Endothelial cell of umbilical vein (primary cell): ENCODE measurements at regions of chr1 and their contacts with region 1.

Region 1: GRCh38 chr1:47262787-47263413 is 30.9 kb upstream of the TAL1 start:
- DNase-seq: peak; percentile 77
- H3K4me3 ChIP-seq: no peak overlapping the region
- H3K27ac ChIP-seq: no peak overlapping the region
- H3K4me1 ChIP-seq: no peaks in the 10 kb centered on the region
- H3K27me3 ChIP-seq: no peaks in the 10 kb centered on the region
- CTCF ChIP-seq: peak; percentile 60 to 62
- POLR2A ChIP-seq: no peak

Region 2: GRCh38 chr1:46948629-46949274 is 314.1 kb before region 1 on chr1:
- CTCF ChIA-PET with region 1: no interaction called
- POLR2A ChIA-PET with region 1: no interaction called
- dilution Hi-C with region 1: no loop called
- intact Hi-C with region 1: no loop called
- DNase-seq: no peak
- H3K4me3 ChIP-seq: no peak overlapping the region
- H3K27ac ChIP-seq: no peak overlapping the region
- H3K4me1 ChIP-seq: no peaks in the 10 kb centered on the region
- H3K27me3 ChIP-seq: no peaks in the 10 kb centered on the region
- CTCF ChIP-seq: no peak
- POLR2A ChIP-seq: no peak

Region 3: GRCh38 chr1:47201179-47201578 is 61.7 kb before region 1 on chr1:
- CTCF ChIA-PET with region 1: interaction called, 224 read pairs
- POLR2A ChIA-PET with region 1: no interaction called
- dilution Hi-C with region 1: no loop called
- intact Hi-C with region 1: no loop called
- DNase-seq: peak; percentile 29
- H3K4me3 ChIP-seq: no peak overlapping the region
- H3K27ac ChIP-seq: no peak overlapping the region
- H3K4me1 ChIP-seq: no peaks in the 10 kb centered on the region
- H3K27me3 ChIP-seq: no peaks in the 10 kb centered on the region
- CTCF ChIP-seq: no peak
- POLR2A ChIP-seq: no peak

Region 4: GRCh38 chr1:47225430-47226100 is 37.3 kb before region 1 on chr1:
- CTCF ChIA-PET with region 1: interaction called, 76 read pairs
- POLR2A ChIA-PET with region 1: interaction called, 15 read pairs
- dilution Hi-C with region 1: no loop called
- intact Hi-C with region 1: loop called (anchors 2 kb)
- DNase-seq: peak; percentile 48
- H3K4me3 ChIP-seq: peak overlapping the region; percentile 3 to 41 (median 6)
- H3K27ac ChIP-seq: peak overlapping the region; percentile 65
- H3K4me1 ChIP-seq: peaks cover 37% of the 10 kb centered on the region
- H3K27me3 ChIP-seq: no peaks in the 10 kb centered on the region
- CTCF ChIP-seq: no peak
- POLR2A ChIP-seq: no peak

Region 5: GRCh38 chr1:47243910-47244309 is 19.0 kb before region 1 on chr1:
- CTCF ChIA-PET with region 1: interaction called, 14 read pairs
- POLR2A ChIA-PET with region 1: no interaction called
- dilution Hi-C with region 1: no loop called
- intact Hi-C with region 1: no loop called
- DNase-seq: no peak
- H3K4me3 ChIP-seq: no peak overlapping the region
- H3K27ac ChIP-seq: no peak overlapping the region
- H3K4me1 ChIP-seq: peaks cover 19% of the 10 kb centered on the region
- H3K27me3 ChIP-seq: no peaks in the 10 kb centered on the region
- CTCF ChIP-seq: no peak
- POLR2A ChIP-seq: no peak

Region 6: DNA sequence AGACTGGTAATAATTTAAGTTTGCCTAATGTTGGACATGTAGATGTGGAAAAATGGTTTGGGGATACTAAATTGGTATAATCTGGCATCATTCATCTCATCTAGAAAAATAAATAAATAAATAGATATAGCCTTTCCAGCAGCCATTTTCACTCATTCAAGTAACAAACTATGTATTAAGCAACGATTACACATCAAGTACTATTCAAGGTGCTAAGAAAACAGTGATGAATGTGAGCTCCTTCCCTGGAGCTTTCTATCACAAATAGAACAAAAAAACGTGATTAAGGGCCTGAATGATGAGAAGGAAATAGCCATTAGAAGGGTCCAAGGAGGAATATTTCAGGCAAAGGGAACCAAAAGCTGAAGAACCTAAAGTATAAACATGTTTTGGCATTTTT is 13.9 kb after region 1 on chr1:
- CTCF ChIA-PET with region 1: interaction called, 11 read pairs
- POLR2A ChIA-PET with region 1: no interaction called
- dilution Hi-C with region 1: no loop called
- intact Hi-C with region 1: no loop called
- DNase-seq: no peak
- H3K4me3 ChIP-seq: no peak overlapping the region
- H3K27ac ChIP-seq: no peak overlapping the region
- H3K4me1 ChIP-seq: no peaks in the 10 kb centered on the region
- H3K27me3 ChIP-seq: no peaks in the 10 kb centered on the region
- CTCF ChIP-seq: no peak
- POLR2A ChIP-seq: no peak